ENCODE measurements at regions of chr11 and their contacts with region 1.

Region 1: DNA sequence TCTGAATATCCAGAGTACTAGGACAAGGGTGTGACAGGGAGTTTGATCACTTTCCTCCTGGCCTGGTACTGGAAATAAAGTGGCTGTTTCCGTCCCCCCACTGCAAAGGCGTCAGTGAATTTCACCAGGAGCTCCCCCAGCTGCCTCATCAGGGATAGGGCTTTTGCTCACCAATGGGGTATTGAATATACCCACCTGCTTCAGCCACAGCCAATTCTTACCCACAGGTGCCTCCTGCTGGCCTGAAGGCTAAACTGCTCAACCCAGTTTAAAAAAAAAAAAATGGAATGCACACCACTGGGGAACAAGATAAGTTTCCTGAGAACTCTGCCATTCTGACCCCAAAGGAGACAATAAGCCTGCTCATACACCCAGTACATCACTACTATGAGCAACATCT is 65.3 kb upstream of the MS4A8 start:
- DNase-seq: no peak
- ATAC-seq: peak; percentile 59
- H3K4me3 Mint-ChIP-seq: peak overlapping the region; percentile 58
- H3K27ac Mint-ChIP-seq: peak overlapping the region; percentile 78
- H3K4me1 Mint-ChIP-seq: peaks cover 41% of the 10 kb centered on the region
- H3K27me3 Mint-ChIP-seq: peaks cover 5% of the 10 kb centered on the region
- CTCF ChIP-seq: peak; percentile 42

Region 2: DNA sequence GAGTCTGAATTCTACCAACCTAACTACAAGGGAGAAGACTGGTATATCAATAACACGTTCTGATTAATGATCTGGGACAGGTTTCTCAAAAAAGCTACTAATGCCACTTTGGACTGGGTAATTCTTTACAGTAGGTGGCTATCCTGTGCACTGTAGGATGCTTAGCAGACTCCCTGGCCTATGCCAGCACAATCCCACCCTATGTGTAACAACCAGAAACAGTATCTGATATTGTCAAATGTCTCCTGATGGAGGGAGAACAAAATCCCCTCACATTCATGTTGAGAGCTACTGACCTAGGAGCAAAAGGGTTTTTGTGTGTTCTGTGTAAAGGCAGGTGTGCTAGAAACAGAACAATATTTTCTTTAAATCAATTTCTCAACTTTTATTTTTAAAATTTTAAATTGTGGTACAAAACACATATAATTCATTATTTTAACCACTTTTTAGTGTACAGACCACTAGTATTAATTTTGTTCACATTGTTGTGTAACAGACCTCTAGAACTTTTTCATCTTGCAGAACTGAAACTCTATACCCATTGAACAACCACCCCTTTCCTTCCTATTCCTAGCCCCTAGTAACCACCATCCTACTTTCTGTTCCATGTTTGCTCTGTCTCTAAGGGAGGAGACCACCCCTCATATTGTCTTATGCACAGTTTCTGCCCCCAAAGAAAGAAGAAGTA is 449.2 kb before region 1 on chr11:
- CTCF ChIA-PET with region 1: no interaction called
- POLR2A ChIA-PET with region 1: no interaction called
- intact Hi-C with region 1: no loop called
- DNase-seq: no peak
- ATAC-seq: peak; percentile 84
- H3K4me3 Mint-ChIP-seq: peak overlapping the region; percentile 7
- H3K27ac Mint-ChIP-seq: peak overlapping the region; percentile 54
- H3K4me1 Mint-ChIP-seq: peaks cover 54% of the 10 kb centered on the region
- H3K27me3 Mint-ChIP-seq: no peaks in the 10 kb centered on the region
- CTCF ChIP-seq: no peak

Region 3: DNA sequence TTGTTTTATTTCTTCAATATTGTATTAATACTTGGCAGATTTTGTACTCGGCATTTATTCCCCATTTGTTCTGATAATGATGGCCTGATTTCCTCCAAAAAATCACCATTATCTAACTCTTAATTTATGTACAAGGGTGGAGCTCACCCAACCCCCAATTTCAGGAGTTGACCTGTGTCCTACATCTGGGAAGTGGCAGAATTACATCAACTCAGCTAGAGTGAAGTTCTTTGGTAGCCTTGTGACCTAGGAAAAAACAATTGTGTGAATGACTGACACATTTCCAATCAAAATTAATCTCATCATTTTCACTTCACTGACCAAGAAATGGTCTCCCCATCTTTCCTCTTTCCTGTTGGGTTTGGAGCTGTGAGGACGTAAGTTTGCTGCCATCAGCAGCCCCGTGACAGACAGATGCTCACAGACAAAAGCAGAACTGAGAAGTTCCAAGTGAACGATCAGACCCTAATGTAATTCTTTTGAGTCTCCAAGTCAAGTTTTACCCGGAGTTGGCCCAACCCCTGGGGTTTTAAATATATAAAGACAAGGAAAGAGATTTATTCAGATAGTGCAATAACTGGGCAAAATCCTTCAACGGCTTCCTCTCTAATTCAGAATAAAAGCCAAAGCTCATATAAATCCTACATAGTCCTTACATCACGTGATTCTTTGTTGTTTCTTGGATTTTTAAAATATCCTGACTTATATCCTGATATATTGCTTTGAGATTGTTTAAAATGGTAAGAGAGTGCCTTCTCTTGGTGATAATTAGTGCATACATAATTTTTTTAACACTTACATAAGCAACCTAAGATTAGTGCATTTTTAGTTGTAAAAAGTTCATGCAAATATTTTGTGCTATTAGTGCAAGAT is 323.5 kb before region 1 on chr11:
- CTCF ChIA-PET with region 1: no interaction called
- POLR2A ChIA-PET with region 1: interaction called, 9 read pairs
- intact Hi-C with region 1: loop called (anchors 1 kb)
- DNase-seq: no peak
- ATAC-seq: peak; percentile 75
- H3K4me3 Mint-ChIP-seq: peak overlapping the region; percentile 58
- H3K27ac Mint-ChIP-seq: peak overlapping the region; percentile 91
- H3K4me1 Mint-ChIP-seq: peaks cover 49% of the 10 kb centered on the region
- H3K27me3 Mint-ChIP-seq: no peaks in the 10 kb centered on the region
- CTCF ChIP-seq: no peak

Region 4: GRCh38 chr11:60485986-60486385 is 148.1 kb before region 1 on chr11:
- CTCF ChIA-PET with region 1: interaction called, 10 read pairs
- POLR2A ChIA-PET with region 1: no interaction called
- intact Hi-C with region 1: loop called (anchors 1 kb)
- DNase-seq: peak; percentile 40
- ATAC-seq: peak; percentile 95
- H3K4me3 Mint-ChIP-seq: peak overlapping the region; percentile 42
- H3K27ac Mint-ChIP-seq: peak overlapping the region; percentile 63
- H3K4me1 Mint-ChIP-seq: peaks cover 55% of the 10 kb centered on the region
- H3K27me3 Mint-ChIP-seq: no peaks in the 10 kb centered on the region
- CTCF ChIP-seq: peak; percentile 44

Region 5: DNA sequence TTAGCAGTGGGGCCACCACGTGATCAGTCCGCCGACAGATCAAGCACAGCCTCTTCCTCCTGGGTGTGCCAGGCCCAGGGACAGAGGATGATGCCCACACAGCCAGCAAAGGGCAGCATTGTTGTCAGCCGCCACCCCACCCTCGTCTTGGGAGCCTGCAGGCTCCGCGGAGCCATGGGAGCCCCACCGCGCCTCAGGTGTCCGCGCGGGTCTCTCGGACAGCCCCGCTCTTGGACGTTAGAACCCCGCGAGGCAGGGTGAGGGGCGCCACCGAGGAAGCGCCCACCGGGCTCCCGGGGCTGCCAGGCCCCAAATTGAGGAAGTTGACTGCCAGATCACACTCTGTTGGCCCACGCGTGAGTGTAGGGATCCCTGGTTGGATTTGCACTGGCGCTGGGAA is 18.6 kb before region 1 on chr11:
- CTCF ChIA-PET with region 1: interaction called, 33 read pairs
- POLR2A ChIA-PET with region 1: interaction called, 7 read pairs
- intact Hi-C with region 1: loop called (anchors 1 kb)
- DNase-seq: no peak
- ATAC-seq: no peak
- H3K4me3 Mint-ChIP-seq: no peak overlapping the region
- H3K27ac Mint-ChIP-seq: no peak overlapping the region
- H3K4me1 Mint-ChIP-seq: peaks cover 10% of the 10 kb centered on the region
- H3K27me3 Mint-ChIP-seq: peaks cover 9% of the 10 kb centered on the region
- CTCF ChIP-seq: no peak

Region 6: DNA sequence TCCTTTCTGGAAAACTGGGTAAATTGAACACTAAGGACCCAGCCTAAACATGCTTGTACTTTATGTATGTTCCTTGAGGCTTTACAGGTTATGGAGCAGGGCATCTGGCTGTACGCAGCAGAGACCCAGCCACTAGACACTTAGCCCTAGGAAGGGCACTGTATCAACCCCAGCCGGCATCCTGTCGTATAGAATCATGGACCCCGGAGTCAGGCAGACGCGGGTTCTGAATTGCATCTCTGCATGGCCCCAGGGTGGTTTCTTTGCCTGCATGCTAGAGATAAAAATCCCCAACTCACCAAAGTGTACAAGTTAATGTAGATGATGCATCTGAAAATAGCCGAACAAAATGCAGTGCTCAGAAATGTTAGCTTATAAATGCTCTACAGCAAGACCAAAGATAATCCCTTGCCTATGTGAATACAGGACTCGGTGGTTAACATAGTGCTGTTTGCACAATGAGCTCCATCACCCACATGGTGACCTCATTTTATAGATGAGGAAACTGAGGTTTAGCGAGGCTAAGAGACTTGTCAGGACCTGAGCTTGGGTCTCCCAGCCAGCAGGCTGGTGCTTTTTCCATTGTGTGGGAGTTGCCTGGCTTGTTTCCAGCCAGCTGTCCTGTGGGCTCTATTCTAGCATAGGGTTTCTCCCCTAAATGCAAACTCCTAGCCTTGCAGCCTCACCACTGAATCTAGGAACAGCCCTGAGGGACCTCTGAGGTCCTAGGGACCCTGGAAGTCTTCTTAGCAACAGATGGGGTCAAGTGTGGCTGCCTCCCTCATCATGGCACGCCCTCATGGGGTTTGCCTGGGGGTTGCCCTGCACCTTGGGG is 344.6 kb after region 1 on chr11:
- CTCF ChIA-PET with region 1: no interaction called
- POLR2A ChIA-PET with region 1: no interaction called
- intact Hi-C with region 1: no loop called
- DNase-seq: no peak
- ATAC-seq: no peak
- H3K4me3 Mint-ChIP-seq: no peak overlapping the region
- H3K27ac Mint-ChIP-seq: no peak overlapping the region
- H3K4me1 Mint-ChIP-seq: peaks cover 18% of the 10 kb centered on the region
- H3K27me3 Mint-ChIP-seq: no peaks in the 10 kb centered on the region
- CTCF ChIP-seq: no peak